GM18951 (cell line): ENCODE measurements at regions of chr5 and their contacts with region 1.

Region 1: DNA sequence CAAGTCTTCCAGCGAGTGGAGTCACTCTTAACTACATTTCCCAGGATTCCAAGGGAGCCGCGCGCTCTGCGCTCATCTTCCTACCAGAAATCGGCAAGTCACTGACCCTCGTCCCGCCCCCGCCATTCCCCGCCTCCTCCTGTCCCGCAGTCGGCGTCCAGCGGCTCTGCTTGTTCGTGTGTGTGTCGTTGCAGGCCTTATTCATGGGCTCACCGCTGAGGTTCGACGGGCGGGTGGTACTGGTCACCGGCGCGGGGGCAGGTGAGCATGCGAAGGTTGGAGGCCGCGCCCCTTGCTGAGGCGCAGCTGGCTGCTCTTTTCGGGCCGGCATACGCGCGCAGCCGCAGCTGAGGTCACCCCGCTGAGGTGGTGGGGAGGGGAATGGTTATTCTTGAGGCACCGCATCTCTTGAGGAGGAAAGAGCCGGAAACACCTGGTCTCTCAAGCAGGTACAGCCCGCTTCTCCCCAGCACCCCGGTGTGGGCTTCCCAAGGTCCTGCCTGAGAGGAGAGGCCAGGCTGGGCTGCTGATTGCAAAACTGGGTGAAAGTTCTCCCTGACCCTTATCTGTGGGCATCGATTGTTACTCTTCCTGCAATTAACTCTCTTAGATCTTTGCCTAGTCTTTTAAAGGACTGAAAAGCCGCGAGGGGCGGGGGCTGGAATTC is at the start of gene HSD17B4:
- POLR2A ChIP-seq: peak; percentile 77

Region 2: DNA sequence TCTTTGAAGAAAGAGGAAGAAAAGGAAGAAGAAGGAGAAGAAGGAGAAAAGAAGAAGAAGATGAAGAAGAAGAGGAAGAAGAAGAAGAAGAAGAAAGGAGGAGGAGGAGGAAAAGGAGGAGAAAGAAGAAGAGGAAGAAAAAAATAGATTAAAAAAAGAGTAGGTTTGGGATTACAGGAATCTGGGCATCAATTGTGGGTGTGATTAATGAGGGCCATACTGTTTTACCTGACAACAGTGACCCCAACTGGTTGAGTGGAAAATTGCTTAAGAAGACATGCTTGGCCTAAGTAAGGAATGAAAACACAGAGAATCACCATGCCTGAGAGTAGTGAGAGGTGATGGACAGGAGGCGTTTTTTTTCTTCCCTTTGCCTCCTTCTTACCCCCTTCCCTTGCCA is 291.4 kb after region 1 on chr5:
- in situ Hi-C with region 1: loop called (anchors 25 kb)
- POLR2A ChIP-seq: no peak

Region 3: DNA sequence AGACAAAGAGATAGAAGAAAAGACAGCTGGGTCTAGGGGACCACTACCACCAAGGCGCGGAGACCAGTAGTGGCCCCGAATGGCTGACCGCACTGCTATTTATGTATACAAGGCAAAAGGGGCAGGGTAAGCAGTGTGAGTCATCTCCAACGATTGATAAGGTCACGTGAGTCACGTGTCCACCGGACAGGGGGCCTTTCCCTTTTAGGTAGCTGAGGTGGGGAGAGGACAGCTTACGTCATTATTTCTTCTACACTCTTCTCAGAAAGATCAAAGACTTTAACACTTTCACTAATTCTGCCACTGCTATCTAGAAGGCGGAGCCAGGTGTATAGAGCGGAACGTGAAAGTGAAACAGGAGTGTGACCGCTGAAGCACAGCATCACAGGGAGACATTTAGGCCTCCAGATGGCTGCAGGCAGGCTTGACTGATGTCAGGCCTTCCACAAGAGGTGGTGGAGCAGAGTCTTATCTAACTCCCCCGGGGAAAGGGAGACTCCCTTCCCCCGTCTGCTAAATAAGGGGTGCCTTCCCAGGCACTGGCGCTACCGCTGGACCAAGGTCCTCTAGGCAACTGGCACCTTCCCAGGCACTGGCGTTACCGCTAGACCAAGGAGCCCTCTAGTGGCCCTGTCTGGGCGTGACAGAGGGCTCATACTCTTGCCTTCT is 1005.5 kb after region 1 on chr5:
- in situ Hi-C with region 1: loop called (anchors 25 kb)
- POLR2A ChIP-seq: no peak